Activated naive CD4-positive, alpha-beta T cell treated with anti-CD3 and anti-CD28 coated beads for 36 hours (primary cell): ENCODE measurements at regions of chr20 and their contacts with region 1.

Region 1: GRCh38 chr20:2729251-2729713 is 36.7 kb downstream of the EBF4 start:
- DNase-seq: peak; percentile 61
- H3K4me3 Mint-ChIP-seq: peak overlapping the region; percentile 44
- H3K27ac Mint-ChIP-seq: peak overlapping the region; percentile 68
- H3K4me1 Mint-ChIP-seq: peaks cover 21% of the 10 kb centered on the region
- H3K27me3 Mint-ChIP-seq: no peaks in the 10 kb centered on the region

Region 2: GRCh38 chr20:2742934-2743559 is 13.8 kb after region 1 on chr20:
- CTCF ChIA-PET with region 1: interaction called, 49 read pairs
- intact Hi-C with region 1: loop called (anchors 1 kb)
- DNase-seq: peak; percentile 81
- H3K4me3 Mint-ChIP-seq: no peak overlapping the region
- H3K27ac Mint-ChIP-seq: no peak overlapping the region
- H3K4me1 Mint-ChIP-seq: peaks cover 42% of the 10 kb centered on the region
- H3K27me3 Mint-ChIP-seq: no peaks in the 10 kb centered on the region

Region 3: DNA sequence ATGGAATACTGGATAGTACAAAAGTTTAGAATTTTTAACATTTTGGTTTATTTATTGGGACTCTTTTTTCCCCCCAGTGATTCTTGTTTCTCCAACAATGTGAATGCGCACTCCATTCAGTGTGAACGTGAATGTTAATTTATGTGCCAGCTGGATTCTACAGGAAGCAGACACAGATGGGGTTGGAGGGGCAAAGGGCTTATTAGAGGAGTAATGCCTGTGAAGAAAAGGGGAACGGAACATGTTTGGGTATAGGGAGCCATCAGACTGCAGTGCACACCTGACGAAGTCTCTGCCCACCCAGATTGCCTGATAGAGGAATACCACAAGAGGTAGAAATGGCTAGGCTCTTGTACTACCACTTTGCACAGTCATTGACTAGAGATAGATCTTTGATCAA is 192.2 kb after region 1 on chr20:
- CTCF ChIA-PET with region 1: no interaction called
- intact Hi-C with region 1: no loop called
- DNase-seq: no peak
- H3K4me3 Mint-ChIP-seq: no peak overlapping the region
- H3K27ac Mint-ChIP-seq: no peak overlapping the region
- H3K4me1 Mint-ChIP-seq: peaks cover 23% of the 10 kb centered on the region
- H3K27me3 Mint-ChIP-seq: no peaks in the 10 kb centered on the region

Region 4: GRCh38 chr20:3371754-3372153 is 642.5 kb after region 1 on chr20:
- CTCF ChIA-PET with region 1: no interaction called
- intact Hi-C with region 1: no loop called
- DNase-seq: no peak
- H3K4me3 Mint-ChIP-seq: no peak overlapping the region
- H3K27ac Mint-ChIP-seq: no peak overlapping the region
- H3K4me1 Mint-ChIP-seq: peaks cover 5% of the 10 kb centered on the region
- H3K27me3 Mint-ChIP-seq: no peaks in the 10 kb centered on the region